ENCODE measurements at regions of chr19 and their contacts with region 1.

Region 1: GRCh38 chr19:48993175-48994034 is at the starts of genes GYS1 and RUVBL2:
- DNase-seq: peak; percentile 99
- H3K4me3 Mint-ChIP-seq: peak within 1 kb of the TSS; percentile 96
- H3K27ac Mint-ChIP-seq: peak within 1 kb of the TSS; percentile 93
- H3K4me1 Mint-ChIP-seq: peaks cover 43% of the 10 kb centered on the region
- H3K27me3 Mint-ChIP-seq: no peaks in the 10 kb centered on the region
- total RNA-seq, gene GYS1: 42.2 to 47.6 TPM
- total RNA-seq, gene RUVBL2: 107 to 109 TPM

Region 2: GRCh38 chr19:48872182-48872883 is 121.1 kb before region 1 on chr19 and contains the start of gene PPP1R15A:
- CTCF ChIA-PET with region 1: interaction called, 8 read pairs
- POLR2A ChIA-PET with region 1: interaction called, 6 read pairs
- intact Hi-C with region 1: loop called (anchors 1 kb)
- DNase-seq: peak; percentile 99
- H3K4me3 Mint-ChIP-seq: peak within 1 kb of the TSS; percentile 95
- H3K27ac Mint-ChIP-seq: peak within 1 kb of the TSS; percentile 99
- H3K4me1 Mint-ChIP-seq: peaks cover 30% of the 10 kb centered on the region
- H3K27me3 Mint-ChIP-seq: peaks cover 2% of the 10 kb centered on the region
- total RNA-seq, gene PPP1R15A: 49.7 to 52.0 TPM

Region 3: DNA sequence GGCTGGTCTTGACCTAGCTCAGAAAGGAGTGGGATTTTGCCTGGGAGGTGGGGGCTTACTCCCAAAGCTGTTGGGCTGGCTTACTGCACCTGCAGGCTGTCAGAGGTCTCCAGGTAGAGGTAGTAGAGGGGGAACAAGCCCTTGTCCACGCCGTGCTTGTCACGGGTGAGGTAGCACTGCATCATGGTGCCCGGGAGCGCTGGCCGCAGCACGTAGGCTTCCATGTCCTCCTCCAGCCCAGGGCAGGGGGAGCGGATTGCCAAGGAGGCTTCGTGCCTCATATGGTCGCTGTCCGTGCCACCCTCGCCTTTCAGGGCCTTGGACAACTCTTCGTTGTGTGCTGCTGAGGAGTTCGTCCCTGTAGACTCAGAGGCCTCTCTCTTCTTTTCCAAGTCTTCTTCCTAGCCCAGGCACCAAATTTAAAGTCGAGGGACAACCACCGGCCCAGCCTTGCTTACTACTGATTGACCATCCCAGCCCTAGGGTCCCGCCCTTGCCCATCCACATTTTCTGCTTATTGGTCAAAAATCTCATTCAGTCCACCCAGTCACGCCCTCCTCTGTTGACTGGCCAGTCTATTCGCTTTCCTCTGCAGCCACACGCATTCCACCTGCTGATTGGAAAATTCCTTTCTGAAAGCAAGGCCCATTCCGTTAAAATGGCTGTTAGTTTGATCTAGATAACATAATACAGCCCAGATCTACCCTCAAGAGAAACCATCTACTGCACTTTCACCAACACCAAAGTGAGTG is 105.4 kb before region 1 on chr19:
- CTCF ChIA-PET with region 1: no interaction called
- POLR2A ChIA-PET with region 1: no interaction called
- intact Hi-C with region 1: no loop called
- DNase-seq: no peak
- H3K4me3 Mint-ChIP-seq: no peak overlapping the region
- H3K27ac Mint-ChIP-seq: no peak overlapping the region
- H3K4me1 Mint-ChIP-seq: no peaks in the 10 kb centered on the region
- H3K27me3 Mint-ChIP-seq: peaks cover 3% of the 10 kb centered on the region

Region 4: DNA sequence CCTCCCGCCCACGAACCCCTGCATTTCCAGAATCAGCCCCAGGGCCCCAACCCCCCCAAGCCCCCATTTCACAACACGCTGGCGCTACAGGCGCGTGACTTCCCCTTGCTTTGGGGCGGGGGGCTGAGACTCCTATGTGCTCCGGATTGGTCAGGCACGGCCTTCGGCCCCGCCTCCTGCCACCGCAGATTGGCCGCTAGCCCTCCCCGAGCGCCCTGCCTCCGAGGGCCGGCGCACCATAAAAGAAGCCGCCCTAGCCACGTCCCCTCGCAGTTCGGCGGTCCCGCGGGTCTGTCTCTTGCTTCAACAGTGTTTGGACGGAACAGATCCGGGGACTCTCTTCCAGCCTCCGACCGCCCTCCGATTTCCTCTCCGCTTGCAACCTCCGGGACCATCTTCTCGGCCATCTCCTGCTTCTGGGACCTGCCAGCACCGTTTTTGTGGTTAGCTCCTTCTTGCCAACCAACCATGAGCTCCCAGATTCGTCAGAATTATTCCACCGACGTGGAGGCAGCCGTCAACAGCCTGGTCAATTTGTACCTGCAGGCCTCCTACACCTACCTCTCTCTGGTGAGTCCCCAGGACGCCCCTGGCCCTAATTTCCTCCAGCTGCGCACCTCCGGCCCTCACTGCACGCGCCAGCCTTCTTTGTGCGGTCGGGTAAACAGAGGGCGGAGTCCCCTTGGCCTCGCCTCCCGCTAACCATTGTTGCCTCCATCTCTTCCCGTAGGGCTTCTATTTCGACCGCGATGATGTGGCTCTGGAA is 28.2 kb before region 1 on chr19 and contains the start of gene FTL:
- CTCF ChIA-PET with region 1: interaction called, 25 read pairs
- POLR2A ChIA-PET with region 1: interaction called, 5 read pairs
- intact Hi-C with region 1: loop called (anchors 1 kb)
- DNase-seq: peak; percentile 95
- H3K4me3 Mint-ChIP-seq: peak within 1 kb of the TSS; percentile 89
- H3K27ac Mint-ChIP-seq: peak within 1 kb of the TSS; percentile 93
- H3K4me1 Mint-ChIP-seq: peaks cover 51% of the 10 kb centered on the region
- H3K27me3 Mint-ChIP-seq: no peaks in the 10 kb centered on the region
- total RNA-seq, gene FTL: 870 to 900 TPM

Region 5: GRCh38 chr19:48975947-48976847 is 17.2 kb before region 1 on chr19:
- CTCF ChIA-PET with region 1: interaction called, 41 read pairs
- POLR2A ChIA-PET with region 1: interaction called, 3 read pairs
- intact Hi-C with region 1: no loop called
- DNase-seq: peak; percentile 47
- H3K4me3 Mint-ChIP-seq: no peak overlapping the region
- H3K27ac Mint-ChIP-seq: peak overlapping the region; percentile 19
- H3K4me1 Mint-ChIP-seq: peaks cover 5% of the 10 kb centered on the region
- H3K27me3 Mint-ChIP-seq: no peaks in the 10 kb centered on the region

Region 6: DNA sequence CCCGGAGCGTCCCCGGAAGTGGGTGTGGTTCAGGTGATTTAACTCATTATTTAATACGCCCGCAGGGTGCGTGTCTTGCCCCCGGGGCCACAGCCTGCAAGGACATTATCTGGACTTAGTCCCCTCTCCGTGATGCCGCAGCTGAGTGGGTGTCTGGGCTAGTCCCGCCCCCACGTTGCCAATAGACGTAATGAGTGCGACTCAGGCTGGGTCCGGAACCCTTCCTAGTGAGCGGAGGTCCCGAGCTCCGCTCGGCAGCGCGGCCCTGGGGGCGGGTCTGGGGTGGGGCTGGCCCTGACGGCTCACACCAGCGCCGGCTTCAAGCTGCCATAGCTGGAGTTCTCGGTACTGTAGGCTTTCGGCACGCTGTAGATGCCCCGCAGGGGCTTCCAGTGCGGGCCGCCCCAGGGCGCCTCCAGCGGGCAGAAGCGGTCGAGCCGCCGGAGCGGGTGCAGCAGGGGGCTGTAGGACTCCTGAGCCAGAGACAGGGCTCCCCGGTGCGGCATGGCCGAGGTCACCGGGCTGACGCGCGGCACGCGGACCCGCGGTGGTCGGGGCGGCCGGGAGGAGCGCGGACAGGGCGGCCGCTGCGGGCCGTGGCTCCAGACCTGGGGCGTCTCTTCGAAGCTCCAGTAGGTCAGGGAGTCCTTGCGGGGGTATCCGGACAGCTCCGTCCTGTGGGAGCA is 24.4 kb after region 1 on chr19:
- CTCF ChIA-PET with region 1: interaction called, 42 read pairs
- POLR2A ChIA-PET with region 1: interaction called, 7 read pairs
- intact Hi-C with region 1: no loop called
- DNase-seq: peak; percentile 74
- H3K4me3 Mint-ChIP-seq: peak overlapping the region; percentile 79
- H3K27ac Mint-ChIP-seq: no peak overlapping the region
- H3K4me1 Mint-ChIP-seq: peaks cover 37% of the 10 kb centered on the region
- H3K27me3 Mint-ChIP-seq: peaks cover 4% of the 10 kb centered on the region